PC-9 (cell line): ENCODE measurements at regions of chr16 and their contacts with region 1.

Region 1: GRCh38 chr16:16021988-16022682 is 72.7 kb downstream of the ABCC1 start:
- DNase-seq: peak; percentile 96 to 99
- H3K4me3 ChIP-seq: peak overlapping the region; percentile 37; the same call in 1 of the 2 replicates
- H3K27ac ChIP-seq: peak overlapping the region; percentile 73
- H3K4me1 ChIP-seq: peaks cover 94% of the 10 kb centered on the region
- H3K27me3 ChIP-seq: no peaks in the 10 kb centered on the region
- CTCF ChIP-seq: no peak

Region 2: GRCh38 chr16:15843635-15844279 is 178.4 kb before region 1 on chr16:
- CTCF ChIA-PET with region 1: no interaction called
- POLR2A ChIA-PET with region 1: no interaction called
- intact Hi-C with region 1: no loop called
- DNase-seq: no peak
- H3K4me3 ChIP-seq: no peak overlapping the region
- H3K27ac ChIP-seq: no peak overlapping the region
- H3K4me1 ChIP-seq: no peaks in the 10 kb centered on the region
- H3K27me3 ChIP-seq: no peaks in the 10 kb centered on the region
- CTCF ChIP-seq: no peak

Region 3: GRCh38 chr16:15949210-15950160 is 72.7 kb before region 1 on chr16 and contains the start of gene ABCC1:
- CTCF ChIA-PET with region 1: interaction called, 8 read pairs
- POLR2A ChIA-PET with region 1: no interaction called
- intact Hi-C with region 1: loop called (anchors 5 kb)
- DNase-seq: peak in 1 of 2 experiments; percentile 51
- H3K4me3 ChIP-seq: peak within 1 kb of the TSS; percentile 96
- H3K27ac ChIP-seq: peak within 1 kb of the TSS; percentile 61
- H3K4me1 ChIP-seq: peaks cover 52% of the 10 kb centered on the region
- H3K27me3 ChIP-seq: no peaks in the 10 kb centered on the region
- CTCF ChIP-seq: no peak; the same call in 1 of the 2 replicates
- total RNA-seq, gene ABCC1: 139 and 146 TPM in 2 replicates